A673 (cell line): ENCODE measurements at regions of chr3 and their contacts with region 1.

Region 1: DNA sequence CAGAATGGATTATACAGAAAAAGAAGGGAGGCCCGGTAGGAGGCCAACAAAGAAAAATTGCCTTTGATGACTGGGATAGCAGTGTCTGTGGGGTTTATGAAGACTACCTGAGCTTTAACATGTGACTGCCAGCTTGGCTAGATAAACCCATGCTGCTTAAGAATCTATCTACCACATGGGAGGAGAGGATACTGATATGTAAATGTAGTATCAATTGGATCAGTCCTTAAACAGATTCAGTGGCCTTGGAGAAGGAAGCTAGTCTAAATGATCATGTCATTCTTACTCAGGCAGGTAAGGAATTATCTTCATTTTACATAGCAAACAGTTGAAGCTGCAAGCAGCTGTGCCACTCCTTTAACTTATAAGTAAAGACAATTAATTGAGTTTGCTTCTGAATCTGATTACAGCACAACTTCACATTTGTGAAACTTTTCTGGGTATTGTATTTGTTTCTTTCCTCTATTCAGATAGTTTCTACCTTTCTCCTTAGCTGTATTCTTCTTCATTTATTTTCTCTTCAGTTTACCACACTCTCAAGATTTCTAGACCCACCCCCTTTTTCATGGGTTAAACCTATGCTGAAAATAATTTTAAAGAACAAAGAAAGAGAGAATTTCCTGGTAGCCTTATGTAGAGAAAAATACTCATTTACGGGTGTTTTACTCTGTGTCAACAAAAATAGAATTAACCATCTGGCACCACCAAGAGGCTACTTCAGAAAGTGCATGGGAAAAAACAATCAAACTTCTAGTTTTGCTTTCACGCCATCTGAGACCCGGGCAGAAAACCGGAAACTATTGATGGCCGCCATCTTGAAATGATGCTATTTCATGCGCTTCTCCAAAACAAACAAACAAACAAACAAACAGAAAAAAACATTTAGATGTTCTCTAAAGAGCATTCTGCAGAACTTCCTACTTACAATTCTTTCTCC is 49.8 kb upstream of the SYNPR start:
- DNase-seq: peak; percentile 70
- H3K4me3 ChIP-seq: no peak overlapping the region
- H3K27ac ChIP-seq: no peak overlapping the region
- H3K4me1 ChIP-seq: peaks cover 5% of the 10 kb centered on the region
- H3K27me3 ChIP-seq: no peaks in the 10 kb centered on the region
- CTCF ChIP-seq: peak; percentile 57

Region 2: DNA sequence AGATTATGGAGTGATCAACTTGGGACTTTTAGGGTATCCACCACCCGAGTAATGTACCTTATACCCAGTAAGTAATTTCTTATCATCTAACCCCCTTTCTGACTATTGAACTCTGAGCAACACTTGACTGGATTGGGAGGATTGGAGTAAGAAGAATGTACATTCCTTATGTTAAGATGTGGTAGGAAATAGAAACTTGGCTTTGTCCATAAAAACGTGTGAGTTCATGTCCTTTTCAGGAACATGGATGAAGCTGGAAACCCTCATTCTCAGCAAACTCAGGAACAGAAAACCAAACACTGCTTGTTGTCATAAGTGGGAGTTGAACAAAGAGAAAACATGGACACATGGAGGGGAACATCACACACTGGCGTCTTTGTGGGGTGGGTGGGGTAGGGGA is 1554.7 kb before region 1 on chr3:
- CTCF ChIA-PET with region 1: no interaction called
- POLR2A ChIA-PET with region 1: no interaction called
- intact Hi-C with region 1: no loop called
- DNase-seq: no peak
- H3K4me3 ChIP-seq: no peak overlapping the region
- H3K27ac ChIP-seq: no peak overlapping the region
- H3K4me1 ChIP-seq: peaks cover 8% of the 10 kb centered on the region
- H3K27me3 ChIP-seq: no peaks in the 10 kb centered on the region
- CTCF ChIP-seq: no peak

Region 3: GRCh38 chr3:62665598-62666437 is 562.5 kb before region 1 on chr3:
- CTCF ChIA-PET with region 1: no interaction called
- POLR2A ChIA-PET with region 1: no interaction called
- intact Hi-C with region 1: loop called (anchors 1 kb)
- DNase-seq: peak; percentile 66
- H3K4me3 ChIP-seq: no peak overlapping the region
- H3K27ac ChIP-seq: no peak overlapping the region
- H3K4me1 ChIP-seq: no peaks in the 10 kb centered on the region
- H3K27me3 ChIP-seq: no peaks in the 10 kb centered on the region
- CTCF ChIP-seq: peak; percentile 60

Region 4: GRCh38 chr3:64462203-64462602 is 1233.8 kb after region 1 on chr3:
- CTCF ChIA-PET with region 1: interaction called, 18 read pairs
- POLR2A ChIA-PET with region 1: no interaction called
- intact Hi-C with region 1: no loop called
- DNase-seq: no peak
- H3K4me3 ChIP-seq: no peak overlapping the region
- H3K27ac ChIP-seq: no peak overlapping the region
- H3K4me1 ChIP-seq: no peaks in the 10 kb centered on the region
- H3K27me3 ChIP-seq: no peaks in the 10 kb centered on the region
- CTCF ChIP-seq: no peak